HCT116 (cell line): ENCODE measurements at regions of chr6 and their contacts with region 1.

Region 1: DNA sequence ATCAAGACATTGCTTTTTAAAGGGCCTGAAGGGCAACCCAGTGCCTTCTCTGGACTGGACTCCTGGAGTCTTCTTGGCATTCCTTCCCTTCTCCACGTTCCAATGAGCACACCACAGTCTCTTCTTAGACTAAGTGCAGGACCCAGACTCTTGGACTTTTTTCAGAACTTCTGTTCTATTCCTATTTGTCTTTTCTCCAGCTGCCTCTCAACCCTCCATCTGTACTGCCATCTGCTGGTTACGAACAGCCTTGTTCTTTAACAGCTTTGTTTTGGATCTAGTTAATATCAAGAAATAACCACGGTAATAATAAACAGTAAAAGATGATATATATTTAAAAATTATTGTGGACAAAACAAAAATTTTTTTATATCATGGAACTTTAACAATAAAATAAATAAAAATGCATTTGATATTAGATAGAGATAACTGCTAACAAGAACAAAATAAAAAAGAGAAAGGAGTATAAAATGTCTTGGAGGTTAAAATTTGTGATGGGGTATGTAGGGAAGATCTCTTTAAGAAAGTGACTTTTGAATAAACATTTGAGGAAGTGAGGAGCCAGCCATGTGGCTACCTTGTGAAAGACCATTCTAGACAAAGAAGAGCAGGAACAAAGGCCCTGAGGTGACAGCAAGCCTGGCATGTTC is 105.1 kb upstream of the HCRTR2 start:
- DNase-seq: peak; percentile 49
- ATAC-seq: peak; percentile 79
- H3K4me3 ChIP-seq: no peak overlapping the region
- H3K27ac ChIP-seq: no peak overlapping the region
- H3K4me1 ChIP-seq: no peaks in the 10 kb centered on the region
- H3K27me3 ChIP-seq: no peaks in the 10 kb centered on the region
- CTCF ChIP-seq: peak; percentile 65 to 82 (median 71)
- POLR2A ChIP-seq: no peak
- RAD21 ChIP-seq: peak; percentile 93

Region 2: DNA sequence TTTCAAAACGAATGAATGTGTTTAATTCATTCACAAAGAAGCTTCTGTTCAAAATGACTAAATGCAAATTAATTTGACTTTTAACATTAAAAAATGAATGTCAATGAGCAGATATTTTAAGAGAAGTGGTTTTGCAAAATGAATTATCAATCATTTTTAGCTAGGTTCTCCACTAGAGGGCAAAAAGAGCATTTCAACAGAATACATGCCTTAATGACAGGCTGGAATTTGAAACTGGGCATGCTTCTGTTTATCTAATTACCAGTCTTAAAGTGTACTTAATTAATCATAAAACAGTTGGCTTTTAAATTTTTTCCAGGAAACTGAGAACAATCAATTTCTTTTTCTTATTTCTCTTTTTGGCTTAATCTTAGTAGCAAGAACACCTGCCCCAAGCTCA is 824.8 kb before region 1 on chr6:
- CTCF ChIA-PET with region 1: no interaction called
- POLR2A ChIA-PET with region 1: no interaction called
- RAD21 ChIA-PET with region 1: no interaction called
- intact Hi-C with region 1: loop called (anchors 10 kb)
- DNase-seq: peak; percentile 23
- ATAC-seq: 0 out of 2 replicates have a peak, but pooled peaks have one; percentile 49
- H3K4me3 ChIP-seq: no peak overlapping the region
- H3K27ac ChIP-seq: no peak overlapping the region
- H3K4me1 ChIP-seq: no peaks in the 10 kb centered on the region
- H3K27me3 ChIP-seq: no peaks in the 10 kb centered on the region
- CTCF ChIP-seq: peak; percentile 40 to 68 (median 61); a peak in 5 of 6 replicates
- POLR2A ChIP-seq: no peak
- RAD21 ChIP-seq: peak; percentile 52

Region 3: DNA sequence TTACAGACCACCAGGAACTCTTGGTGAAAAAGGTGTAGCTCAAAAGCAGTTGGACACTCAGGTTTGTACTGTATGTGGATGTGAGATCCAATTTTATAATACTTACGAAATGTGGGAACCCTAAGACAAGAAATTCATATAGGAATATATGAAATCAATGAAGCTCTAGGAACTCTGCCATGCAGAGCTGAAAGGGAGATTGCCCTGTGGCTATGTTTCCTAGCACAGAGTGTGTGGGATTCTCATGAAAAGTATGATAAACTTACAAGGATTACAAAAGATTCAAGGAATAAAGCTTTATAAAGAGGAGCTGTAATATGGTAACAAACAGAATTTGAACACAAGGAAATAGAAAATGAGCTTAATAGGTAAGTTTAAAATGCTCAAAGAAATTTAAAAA is 428.3 kb before region 1 on chr6:
- CTCF ChIA-PET with region 1: no interaction called
- POLR2A ChIA-PET with region 1: no interaction called
- RAD21 ChIA-PET with region 1: no interaction called
- intact Hi-C with region 1: no loop called
- DNase-seq: no peak
- ATAC-seq: no peak
- H3K4me3 ChIP-seq: no peak overlapping the region
- H3K27ac ChIP-seq: no peak overlapping the region
- H3K4me1 ChIP-seq: no peaks in the 10 kb centered on the region
- H3K27me3 ChIP-seq: no peaks in the 10 kb centered on the region
- CTCF ChIP-seq: no peak
- POLR2A ChIP-seq: no peak
- RAD21 ChIP-seq: no peak

Region 4: DNA sequence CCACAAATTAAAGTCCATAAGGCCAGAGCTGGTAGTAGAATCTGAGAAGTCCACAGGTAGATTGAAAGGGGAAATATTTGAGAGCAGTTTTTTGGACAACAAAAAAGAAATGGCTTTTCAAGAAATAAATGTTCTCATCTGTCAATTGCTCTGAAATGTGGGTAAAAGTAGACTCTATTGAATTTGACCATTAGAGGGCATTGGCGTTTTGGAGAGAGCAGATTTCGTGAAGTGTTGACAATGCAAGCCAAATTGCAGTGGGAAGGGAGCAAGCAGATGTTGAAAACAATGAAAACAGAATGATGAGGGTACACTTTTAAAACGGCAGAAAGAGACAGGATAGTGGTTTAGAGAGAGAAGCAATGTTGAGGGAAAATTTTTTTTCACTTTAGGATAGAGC is 371.8 kb before region 1 on chr6:
- CTCF ChIA-PET with region 1: no interaction called
- POLR2A ChIA-PET with region 1: no interaction called
- RAD21 ChIA-PET with region 1: no interaction called
- intact Hi-C with region 1: loop called (anchors 2 kb)
- DNase-seq: peak; percentile 12
- ATAC-seq: peak; percentile 64; the same call in 1 of the 2 replicates
- H3K4me3 ChIP-seq: no peak overlapping the region
- H3K27ac ChIP-seq: no peak overlapping the region
- H3K4me1 ChIP-seq: no peaks in the 10 kb centered on the region
- H3K27me3 ChIP-seq: no peaks in the 10 kb centered on the region
- CTCF ChIP-seq: peak; percentile 27 to 53 (median 46); a peak in 3 of 6 replicates
- POLR2A ChIP-seq: no peak
- RAD21 ChIP-seq: peak; percentile 78

Region 5: DNA sequence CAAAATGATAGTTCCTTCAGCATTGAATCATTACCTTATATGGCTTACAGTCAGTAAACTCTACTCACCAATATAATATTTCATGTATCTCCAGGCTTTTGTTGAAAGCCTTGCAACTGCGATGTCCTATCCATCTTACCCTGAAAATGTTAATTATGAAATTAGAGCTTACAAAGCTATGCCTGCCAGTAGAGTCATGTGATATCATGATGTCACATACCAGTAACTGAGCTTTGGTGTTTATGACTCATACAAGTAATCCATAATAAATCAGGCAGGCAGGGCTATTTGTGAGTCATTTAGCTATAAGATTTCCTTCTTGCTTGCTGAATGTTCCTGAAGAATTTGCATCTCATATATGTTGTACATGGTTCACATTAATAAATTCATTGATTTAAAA is 267.6 kb before region 1 on chr6:
- CTCF ChIA-PET with region 1: no interaction called
- POLR2A ChIA-PET with region 1: no interaction called
- RAD21 ChIA-PET with region 1: no interaction called
- intact Hi-C with region 1: loop called (anchors 10 kb)
- DNase-seq: peak; percentile 83
- ATAC-seq: peak; percentile 86
- H3K4me3 ChIP-seq: peak overlapping the region; percentile 7 to 18; a peak in 2 of 4 replicates
- H3K27ac ChIP-seq: no peak overlapping the region
- H3K4me1 ChIP-seq: peaks cover 11 to 22% of the 10 kb centered on the region in 2 experiments; a peak in 3 of 4 replicates
- H3K27me3 ChIP-seq: no peaks in the 10 kb centered on the region
- CTCF ChIP-seq: no peak
- POLR2A ChIP-seq: no peak
- RAD21 ChIP-seq: no peak

Region 6: GRCh38 chr6:55511124-55511800 is 442.0 kb after region 1 on chr6:
- CTCF ChIA-PET with region 1: no interaction called
- POLR2A ChIA-PET with region 1: no interaction called
- RAD21 ChIA-PET with region 1: no interaction called
- intact Hi-C with region 1: no loop called
- DNase-seq: no peak
- ATAC-seq: no peak
- H3K4me3 ChIP-seq: no peak overlapping the region
- H3K27ac ChIP-seq: no peak overlapping the region
- H3K4me1 ChIP-seq: no peaks in the 10 kb centered on the region
- H3K27me3 ChIP-seq: peaks cover under 1% of the 10 kb centered on the region; the same call in 1 of the 2 replicates
- CTCF ChIP-seq: no peak
- POLR2A ChIP-seq: no peak
- RAD21 ChIP-seq: no peak